ENCODE measurements at regions of chr10 and their contacts with region 1.

Region 1: GRCh38 chr10:109883859-109884771 is 39.2 kb downstream of the XPNPEP1 start:
- DNase-seq: peak; percentile 41 to 82 (median 52)
- ATAC-seq: peak; percentile 88
- H3K4me3 ChIP-seq: no peak overlapping the region
- H3K4me3 Mint-ChIP-seq: no peak overlapping the region
- H3K27ac ChIP-seq: no peak overlapping the region
- H3K27ac Mint-ChIP-seq: no peak overlapping the region
- H3K4me1 ChIP-seq: peaks cover 5% of the 10 kb centered on the region
- H3K4me1 Mint-ChIP-seq: peaks cover 6% of the 10 kb centered on the region
- H3K27me3 ChIP-seq: no peaks in the 10 kb centered on the region
- H3K27me3 Mint-ChIP-seq: no peaks in the 10 kb centered on the region
- CTCF ChIP-seq: peak; percentile 98

Region 2: GRCh38 chr10:109191341-109191740 is 692.8 kb before region 1 on chr10:
- CTCF ChIA-PET with region 1: no interaction called
- POLR2A ChIA-PET with region 1: no interaction called
- intact Hi-C with region 1: no loop called
- DNase-seq: no peak
- ATAC-seq: no peak
- H3K4me3 ChIP-seq: no peak overlapping the region
- H3K4me3 Mint-ChIP-seq: no peak overlapping the region
- H3K27ac ChIP-seq: no peak overlapping the region
- H3K27ac Mint-ChIP-seq: no peak overlapping the region
- H3K4me1 ChIP-seq: no peaks in the 10 kb centered on the region
- H3K4me1 Mint-ChIP-seq: no peaks in the 10 kb centered on the region
- H3K27me3 ChIP-seq: no peaks in the 10 kb centered on the region
- H3K27me3 Mint-ChIP-seq: no peaks in the 10 kb centered on the region
- CTCF ChIP-seq: no peak

Region 3: DNA sequence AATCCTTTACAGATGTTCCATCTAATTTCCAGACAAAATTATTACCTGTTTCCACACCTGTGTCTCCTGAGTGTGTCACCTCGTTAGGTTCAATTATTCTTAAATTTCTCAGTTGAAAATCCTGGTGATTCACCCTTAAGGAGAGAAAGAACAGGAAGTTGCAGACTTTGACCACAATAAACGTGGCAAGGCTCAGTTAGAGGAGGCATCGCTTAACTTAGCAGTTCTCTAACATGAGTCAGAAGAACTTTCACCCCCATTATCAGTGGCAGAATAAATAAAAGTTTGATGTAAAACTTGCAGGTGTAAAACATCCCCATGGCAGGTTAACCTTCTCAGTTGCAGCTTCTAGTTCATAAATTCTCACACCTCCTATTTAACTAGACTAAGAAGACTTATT is 30.9 kb after region 1 on chr10:
- CTCF ChIA-PET with region 1: interaction called, 11 read pairs
- POLR2A ChIA-PET with region 1: interaction called, 10 read pairs
- intact Hi-C with region 1: no loop called
- DNase-seq: peak in 12 of 14 experiments; percentile 8 to 88 (median 30)
- ATAC-seq: peak; percentile 95
- H3K4me3 ChIP-seq: no peak overlapping the region
- H3K4me3 Mint-ChIP-seq: peak overlapping the region; percentile 74
- H3K27ac ChIP-seq: peak overlapping the region in 1 of 2 donors; percentile 38
- H3K27ac Mint-ChIP-seq: peak overlapping the region; percentile 71
- H3K4me1 ChIP-seq: peaks cover 48% of the 10 kb centered on the region
- H3K4me1 Mint-ChIP-seq: peaks cover 78% of the 10 kb centered on the region
- H3K27me3 ChIP-seq: no peaks in the 10 kb centered on the region
- H3K27me3 Mint-ChIP-seq: no peaks in the 10 kb centered on the region
- CTCF ChIP-seq: no peak

Region 4: DNA sequence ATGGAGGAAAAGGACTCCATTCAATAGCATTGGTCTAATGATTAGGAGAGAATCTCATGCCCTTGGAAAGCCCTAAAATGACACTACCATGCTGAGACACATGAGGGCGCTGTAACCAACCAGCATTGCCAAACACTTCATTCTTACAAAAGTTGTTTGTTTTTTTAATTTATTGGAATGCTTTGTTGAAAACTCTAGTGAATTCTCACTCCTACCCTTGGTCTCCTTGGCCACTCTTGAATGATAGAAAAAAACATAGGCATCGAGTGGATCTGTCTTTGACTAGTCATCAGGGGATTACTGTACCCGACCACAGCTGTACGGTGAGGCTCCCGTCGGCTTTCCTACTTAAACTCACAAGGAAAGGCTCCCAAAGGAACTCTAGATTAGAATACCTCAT is 94.4 kb after region 1 on chr10:
- CTCF ChIA-PET with region 1: interaction called, 9 read pairs
- POLR2A ChIA-PET with region 1: no interaction called
- intact Hi-C with region 1: loop called (anchors 1 to 2 kb)
- DNase-seq: peak; percentile 40 to 80 (median 62)
- ATAC-seq: peak; percentile 73
- H3K4me3 ChIP-seq: no peak overlapping the region
- H3K4me3 Mint-ChIP-seq: no peak overlapping the region
- H3K27ac ChIP-seq: no peak overlapping the region
- H3K27ac Mint-ChIP-seq: no peak overlapping the region
- H3K4me1 ChIP-seq: peaks cover 3% of the 10 kb centered on the region
- H3K4me1 Mint-ChIP-seq: peaks cover 17% of the 10 kb centered on the region
- H3K27me3 ChIP-seq: no peaks in the 10 kb centered on the region
- H3K27me3 Mint-ChIP-seq: no peaks in the 10 kb centered on the region
- CTCF ChIP-seq: peak; percentile 91

Region 5: DNA sequence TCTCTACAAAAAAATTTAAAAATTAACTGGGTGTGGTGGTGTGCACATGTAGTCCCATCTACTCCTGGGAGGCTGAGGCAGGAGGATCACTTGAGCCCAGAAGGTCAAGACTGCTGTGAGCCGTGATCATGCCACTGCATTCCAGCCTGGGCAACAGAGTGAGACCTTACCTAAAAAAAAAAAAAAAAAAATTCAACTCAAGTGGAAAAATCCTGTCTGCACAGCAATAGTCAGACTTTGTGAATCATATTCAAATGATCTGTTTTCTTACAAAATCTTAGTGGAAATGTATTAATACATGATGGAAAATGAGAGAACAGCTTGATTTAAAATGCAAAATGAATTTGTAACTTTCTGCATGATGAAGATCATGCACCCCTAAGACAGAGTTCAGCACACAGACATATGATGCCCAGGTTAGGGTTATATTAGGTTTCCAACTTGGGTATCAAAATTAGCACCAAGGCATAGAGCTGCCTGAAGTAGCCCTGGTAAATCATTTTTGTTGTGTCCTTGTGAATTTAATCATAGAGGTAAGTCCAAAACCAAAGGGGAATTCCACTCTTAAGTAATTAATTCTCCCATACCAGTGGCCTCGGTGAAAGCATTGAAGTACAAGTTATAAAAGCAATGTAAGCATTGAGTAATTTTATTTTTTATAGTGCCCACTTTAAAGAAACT is 217.5 kb after region 1 on chr10:
- CTCF ChIA-PET with region 1: interaction called, 7 read pairs
- POLR2A ChIA-PET with region 1: no interaction called
- intact Hi-C with region 1: loop called in 1 of 2 experiments (anchors 10 kb)
- DNase-seq: no peak
- ATAC-seq: no peak
- H3K4me3 ChIP-seq: no peak overlapping the region
- H3K4me3 Mint-ChIP-seq: no peak overlapping the region
- H3K27ac ChIP-seq: no peak overlapping the region
- H3K27ac Mint-ChIP-seq: peak overlapping the region; percentile 74
- H3K4me1 ChIP-seq: peaks cover 9% of the 10 kb centered on the region
- H3K4me1 Mint-ChIP-seq: peaks cover 73% of the 10 kb centered on the region
- H3K27me3 ChIP-seq: no peaks in the 10 kb centered on the region
- H3K27me3 Mint-ChIP-seq: no peaks in the 10 kb centered on the region
- CTCF ChIP-seq: no peak

Region 6: GRCh38 chr10:110137142-110137545 is 253.0 kb after region 1 on chr10:
- CTCF ChIA-PET with region 1: no interaction called
- POLR2A ChIA-PET with region 1: interaction called, 3 read pairs
- intact Hi-C with region 1: loop called (anchors 2 to 5 kb)
- DNase-seq: peak in 3 of 14 experiments; percentile 74 to 79 (median 77)
- ATAC-seq: peak; percentile 74
- H3K4me3 ChIP-seq: no peak overlapping the region
- H3K4me3 Mint-ChIP-seq: no peak overlapping the region
- H3K27ac ChIP-seq: no peak overlapping the region
- H3K27ac Mint-ChIP-seq: peak overlapping the region; percentile 35
- H3K4me1 ChIP-seq: peaks cover 5% of the 10 kb centered on the region
- H3K4me1 Mint-ChIP-seq: peaks cover 31% of the 10 kb centered on the region
- H3K27me3 ChIP-seq: no peaks in the 10 kb centered on the region
- H3K27me3 Mint-ChIP-seq: no peaks in the 10 kb centered on the region
- CTCF ChIP-seq: peak; percentile 93

Region 7: DNA sequence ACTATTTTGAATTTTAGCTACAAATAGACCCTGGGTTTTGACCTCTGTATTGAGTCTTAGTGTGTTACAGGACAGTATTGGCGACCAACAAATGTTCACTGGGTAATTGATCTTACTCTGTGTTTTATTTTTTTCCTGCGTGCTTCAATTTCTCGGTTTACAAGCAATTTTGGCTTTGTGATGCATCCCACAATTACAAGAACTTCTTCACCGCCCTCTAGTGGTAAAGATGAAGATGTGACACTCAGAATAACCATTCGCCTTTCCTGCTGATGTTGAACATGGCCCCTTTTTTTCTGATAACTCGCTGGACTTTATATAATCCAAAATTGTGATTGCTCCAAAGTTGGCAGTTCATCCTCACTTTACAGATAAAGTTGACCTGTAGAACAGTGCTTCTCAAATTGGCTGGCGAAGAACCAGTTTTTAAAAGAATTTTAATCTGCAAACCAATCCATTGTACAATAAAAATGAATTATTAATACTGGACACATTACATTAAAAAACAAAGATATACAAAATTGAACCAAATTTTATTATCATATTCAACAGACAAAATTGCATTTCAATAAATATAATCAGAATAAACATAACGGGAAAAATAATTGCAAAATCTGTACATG is 663.1 kb after region 1 on chr10:
- CTCF ChIA-PET with region 1: no interaction called
- POLR2A ChIA-PET with region 1: no interaction called
- intact Hi-C with region 1: loop called in 1 of 2 experiments (anchors 5 kb)
- DNase-seq: peak in 3 of 14 experiments; percentile 77 to 79 (median 78)
- ATAC-seq: peak; percentile 80
- H3K4me3 ChIP-seq: no peak overlapping the region
- H3K4me3 Mint-ChIP-seq: no peak overlapping the region
- H3K27ac ChIP-seq: no peak overlapping the region
- H3K27ac Mint-ChIP-seq: no peak overlapping the region
- H3K4me1 ChIP-seq: no peaks in the 10 kb centered on the region
- H3K4me1 Mint-ChIP-seq: peaks cover 6% of the 10 kb centered on the region
- H3K27me3 ChIP-seq: peaks cover 0 to 10% of the 10 kb centered on the region in 2 experiments
- H3K27me3 Mint-ChIP-seq: peaks cover 21% of the 10 kb centered on the region
- CTCF ChIP-seq: peak; percentile 92

Measured in CD4-positive, alpha-beta T cell (primary cell).